Lower leg skin (tissue), 4 donors: ENCODE measurements at regions of chr14 and their contacts with region 1.

Region 1: GRCh38 chr14:100375963-100376735 is 53.0 kb downstream of the SLC25A47 start:
- DNase-seq: peak; percentile 88 to 98
- H3K4me3 ChIP-seq: peak within 1 kb of the TSS; percentile 49
- CTCF ChIP-seq: no peak
- POLR2A ChIP-seq: no peak

Region 2: GRCh38 chr14:100271247-100271939 is 104.8 kb before region 1 on chr14:
- intact Hi-C with region 1: loop called (anchors 5 kb)
- DNase-seq: no peak
- H3K4me3 ChIP-seq: no peak overlapping the region
- CTCF ChIP-seq: no peak
- POLR2A ChIP-seq: no peak

Region 3: DNA sequence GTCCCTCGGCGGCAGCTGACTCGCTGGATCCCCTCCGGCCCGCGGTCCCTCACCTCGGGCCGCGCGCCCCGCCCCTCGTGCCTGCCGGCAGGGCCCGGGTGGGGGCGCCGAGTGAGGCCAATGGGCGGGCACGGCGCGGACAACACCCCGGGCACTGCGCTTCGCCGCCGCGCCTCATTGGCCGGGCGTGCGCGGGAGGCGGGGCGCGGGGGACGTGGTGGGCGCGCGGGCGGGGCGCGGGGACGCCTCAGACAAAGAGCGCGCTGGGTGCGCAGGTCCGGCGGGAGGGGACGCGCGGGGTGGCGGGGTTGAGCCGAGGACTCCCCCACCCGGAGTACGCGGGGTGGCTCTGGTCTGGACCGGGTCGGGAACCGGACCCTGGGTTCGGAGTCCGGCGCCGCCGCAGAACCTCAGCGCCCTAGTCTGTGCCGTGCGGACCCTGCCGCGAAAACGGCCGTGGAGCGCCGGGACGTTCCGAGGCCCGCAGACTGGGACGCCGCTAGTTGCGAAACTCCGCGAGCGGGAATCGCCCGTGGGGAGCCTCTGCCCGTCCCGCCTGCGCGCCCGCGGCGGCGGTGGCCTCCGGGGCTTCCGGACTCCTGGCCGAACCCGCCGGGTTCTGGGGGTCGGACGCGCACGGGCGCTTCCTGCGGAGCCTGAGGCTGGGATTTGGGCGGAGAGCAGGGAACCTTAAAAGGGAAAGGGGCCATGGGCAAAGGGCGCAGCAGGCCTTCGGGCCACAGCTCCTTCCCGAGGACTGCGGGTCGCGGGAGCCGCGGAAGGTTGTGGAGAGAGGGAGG is 69.5 kb before region 1 on chr14 and contains the start of gene SLC25A29:
- intact Hi-C with region 1: no loop called
- DNase-seq: peak; percentile 79 to 97
- H3K4me3 ChIP-seq: peak within 1 kb of the TSS; percentile 77
- CTCF ChIP-seq: no peak
- POLR2A ChIP-seq: no peak
- total RNA-seq, gene SLC25A29: 98.5 to 166 (median 134) TPM

Region 4: GRCh38 chr14:100871234-100872186 is 495.4 kb after region 1 on chr14:
- intact Hi-C with region 1: no loop called
- DNase-seq: peak in 1 of 2 donors; percentile 73
- H3K4me3 ChIP-seq: no peak overlapping the region
- CTCF ChIP-seq: no peak
- POLR2A ChIP-seq: no peak

Region 5: GRCh38 chr14:101953151-101953550 is 1577.0 kb after region 1 on chr14:
- intact Hi-C with region 1: loop called (anchors 5 kb)
- DNase-seq: peak in 1 of 2 donors; percentile 81
- H3K4me3 ChIP-seq: no peak overlapping the region
- CTCF ChIP-seq: no peak
- POLR2A ChIP-seq: no peak